ENCODE measurements at regions of chr18 and their contacts with region 1.

Region 1: DNA sequence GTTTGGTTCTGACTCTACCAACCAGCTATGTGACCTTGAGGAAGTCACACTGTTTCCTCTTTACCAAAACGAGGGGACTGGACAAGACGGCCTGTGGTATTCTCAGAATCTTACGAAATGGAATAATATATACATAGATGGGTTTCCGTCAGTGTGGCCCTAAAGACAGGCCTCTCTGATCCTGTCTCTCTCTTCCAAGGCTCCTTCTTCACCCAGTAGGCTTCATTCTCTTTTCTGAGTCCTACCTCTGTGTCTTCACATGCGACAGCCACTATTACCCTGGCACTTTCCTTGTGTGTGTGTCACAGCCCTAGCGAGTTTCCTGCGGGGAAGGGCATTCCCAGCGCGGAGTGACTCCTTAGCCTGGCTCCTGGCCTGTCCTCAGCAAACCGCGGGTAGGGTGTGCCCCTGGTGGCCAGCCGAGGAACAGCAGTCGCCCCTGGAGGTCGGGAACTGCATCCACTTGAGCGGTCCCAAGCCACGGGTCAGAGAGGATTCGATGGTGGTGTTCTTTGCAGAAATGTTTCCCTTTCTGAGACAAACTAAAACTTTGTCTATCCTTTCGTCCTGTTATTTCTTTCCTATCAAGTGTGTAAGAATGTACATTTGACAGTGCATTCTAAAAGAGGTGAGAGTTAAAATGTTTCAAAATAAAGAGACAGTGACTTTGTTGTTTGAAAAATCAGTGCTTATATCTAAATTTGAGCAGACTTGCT is 63.3 kb downstream of the RAB31 start:
- DNase-seq: peak; percentile 37 to 89 (median 83)
- H3K4me3 ChIP-seq: peak overlapping the region in 28 of 59 donors; percentile 1 to 49 (median 15)
- H3K27ac ChIP-seq: peak overlapping the region in 38 of 59 donors; percentile 0 to 85 (median 50)
- H3K27me3 ChIP-seq: no peaks in the 10 kb centered on the region
- CTCF ChIP-seq: peak; percentile 64 to 99 (median 96)

Region 2: GRCh38 chr18:9683407-9684396 is 87.7 kb before region 1 on chr18:
- intact Hi-C with region 1: loop called (anchors 2 to 5 kb)
- DNase-seq: peak in 2 of 10 donors; percentile 33 to 47
- H3K4me3 ChIP-seq: peak overlapping the region in 1 of 59 donors; percentile 1
- H3K27ac ChIP-seq: peak overlapping the region in 12 of 59 donors; percentile 4 to 71 (median 34)
- H3K27me3 ChIP-seq: no peaks in the 10 kb centered on the region
- CTCF ChIP-seq: peak in 52 of 56 donors; percentile 18 to 73 (median 54)

Region 3: GRCh38 chr18:9701609-9702349 is 69.6 kb before region 1 on chr18:
- intact Hi-C with region 1: no loop called
- DNase-seq: no peak
- H3K4me3 ChIP-seq: no peak overlapping the region
- H3K27ac ChIP-seq: peak overlapping the region in 5 of 59 donors; percentile 3 to 54 (median 28)
- H3K27me3 ChIP-seq: no peaks in the 10 kb centered on the region
- CTCF ChIP-seq: no peak

Measured in dorsolateral prefrontal cortex (tissue), 120 donors.